CD4-positive, alpha-beta T cell (primary cell): ENCODE measurements at regions of chr9 and their contacts with region 1.

Region 1: GRCh38 chr9:37913480-37914153 is 9.7 kb upstream of the SLC25A51 start:
- DNase-seq: peak; percentile 58 to 85 (median 76)
- ATAC-seq: peak; percentile 90
- H3K4me3 ChIP-seq: no peak overlapping the region
- H3K4me3 Mint-ChIP-seq: no peak overlapping the region
- H3K27ac ChIP-seq: no peak overlapping the region
- H3K27ac Mint-ChIP-seq: no peak overlapping the region
- H3K4me1 ChIP-seq: no peaks in the 10 kb centered on the region
- H3K4me1 Mint-ChIP-seq: no peaks in the 10 kb centered on the region
- H3K27me3 ChIP-seq: no peaks in the 10 kb centered on the region
- H3K27me3 Mint-ChIP-seq: peaks cover 5% of the 10 kb centered on the region
- CTCF ChIP-seq: peak; percentile 95

Region 2: GRCh38 chr9:37880916-37881479 is 32.6 kb before region 1 on chr9:
- CTCF ChIA-PET with region 1: no interaction called
- POLR2A ChIA-PET with region 1: no interaction called
- intact Hi-C with region 1: no loop called
- DNase-seq: no peak
- ATAC-seq: no peak
- H3K4me3 ChIP-seq: no peak overlapping the region
- H3K4me3 Mint-ChIP-seq: no peak overlapping the region
- H3K27ac ChIP-seq: no peak overlapping the region
- H3K27ac Mint-ChIP-seq: no peak overlapping the region
- H3K4me1 ChIP-seq: no peaks in the 10 kb centered on the region
- H3K4me1 Mint-ChIP-seq: no peaks in the 10 kb centered on the region
- H3K27me3 ChIP-seq: no peaks in the 10 kb centered on the region
- H3K27me3 Mint-ChIP-seq: no peaks in the 10 kb centered on the region
- CTCF ChIP-seq: no peak

Region 3: GRCh38 chr9:38061326-38061977 is 147.8 kb after region 1 on chr9:
- CTCF ChIA-PET with region 1: no interaction called
- POLR2A ChIA-PET with region 1: no interaction called
- intact Hi-C with region 1: loop called in 1 of 2 experiments (anchors 5 kb)
- DNase-seq: no peak
- ATAC-seq: no peak
- H3K4me3 ChIP-seq: no peak overlapping the region
- H3K4me3 Mint-ChIP-seq: no peak overlapping the region
- H3K27ac ChIP-seq: no peak overlapping the region
- H3K27ac Mint-ChIP-seq: no peak overlapping the region
- H3K4me1 ChIP-seq: no peaks in the 10 kb centered on the region
- H3K4me1 Mint-ChIP-seq: no peaks in the 10 kb centered on the region
- H3K27me3 ChIP-seq: no peaks in the 10 kb centered on the region
- H3K27me3 Mint-ChIP-seq: no peaks in the 10 kb centered on the region
- CTCF ChIP-seq: no peak

Region 4: DNA sequence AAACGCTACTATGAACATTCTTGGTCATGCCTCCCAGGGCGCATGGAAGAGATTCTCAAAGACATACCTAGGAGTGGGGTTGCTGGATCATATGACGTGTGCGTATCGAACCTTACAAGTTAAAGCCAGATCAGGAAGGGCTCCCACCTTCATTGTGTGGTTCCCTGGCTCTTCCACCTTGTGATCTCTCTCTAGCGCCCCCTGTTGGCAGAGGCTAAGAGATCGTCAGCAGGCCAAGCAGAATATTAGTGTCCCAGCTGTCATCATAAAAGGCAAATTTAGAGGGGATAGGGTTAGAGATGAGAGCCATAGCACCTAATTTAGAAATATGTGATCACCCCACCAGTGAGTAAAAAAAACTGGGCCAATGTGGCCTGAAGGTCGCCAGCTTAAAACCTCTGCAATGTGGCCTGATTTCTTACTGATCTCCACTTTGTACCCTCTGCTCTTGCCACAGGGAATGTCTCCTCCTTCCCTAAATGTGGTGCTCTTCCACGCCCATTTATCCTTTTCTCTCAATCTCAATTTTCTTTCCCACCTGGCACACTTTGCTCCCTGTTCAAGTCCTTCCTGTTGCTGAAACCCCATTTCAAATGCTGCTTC is 247.1 kb after region 1 on chr9:
- CTCF ChIA-PET with region 1: no interaction called
- POLR2A ChIA-PET with region 1: no interaction called
- intact Hi-C with region 1: loop called (anchors 1 to 2 kb)
- DNase-seq: peak; percentile 19 to 74 (median 49)
- ATAC-seq: no peak
- H3K4me3 ChIP-seq: no peak overlapping the region
- H3K4me3 Mint-ChIP-seq: no peak overlapping the region
- H3K27ac ChIP-seq: no peak overlapping the region
- H3K27ac Mint-ChIP-seq: no peak overlapping the region
- H3K4me1 ChIP-seq: peaks cover 4% of the 10 kb centered on the region
- H3K4me1 Mint-ChIP-seq: peaks cover 5% of the 10 kb centered on the region
- H3K27me3 ChIP-seq: no peaks in the 10 kb centered on the region
- H3K27me3 Mint-ChIP-seq: no peaks in the 10 kb centered on the region
- CTCF ChIP-seq: peak; percentile 78

Region 5: GRCh38 chr9:38362852-38363593 is 449.4 kb after region 1 on chr9:
- CTCF ChIA-PET with region 1: no interaction called
- POLR2A ChIA-PET with region 1: no interaction called
- intact Hi-C with region 1: loop called in 1 of 2 experiments (anchors 1 kb)
- DNase-seq: peak in 5 of 14 experiments; percentile 7 to 61 (median 27)
- ATAC-seq: peak; percentile 83
- H3K4me3 ChIP-seq: peak overlapping the region; percentile 24
- H3K4me3 Mint-ChIP-seq: peak overlapping the region; percentile 46
- H3K27ac ChIP-seq: no peak overlapping the region
- H3K27ac Mint-ChIP-seq: no peak overlapping the region
- H3K4me1 ChIP-seq: no peaks in the 10 kb centered on the region
- H3K4me1 Mint-ChIP-seq: peaks cover 7% of the 10 kb centered on the region
- H3K27me3 ChIP-seq: no peaks in the 10 kb centered on the region
- H3K27me3 Mint-ChIP-seq: peaks cover 4% of the 10 kb centered on the region
- CTCF ChIP-seq: no peak

Region 6: DNA sequence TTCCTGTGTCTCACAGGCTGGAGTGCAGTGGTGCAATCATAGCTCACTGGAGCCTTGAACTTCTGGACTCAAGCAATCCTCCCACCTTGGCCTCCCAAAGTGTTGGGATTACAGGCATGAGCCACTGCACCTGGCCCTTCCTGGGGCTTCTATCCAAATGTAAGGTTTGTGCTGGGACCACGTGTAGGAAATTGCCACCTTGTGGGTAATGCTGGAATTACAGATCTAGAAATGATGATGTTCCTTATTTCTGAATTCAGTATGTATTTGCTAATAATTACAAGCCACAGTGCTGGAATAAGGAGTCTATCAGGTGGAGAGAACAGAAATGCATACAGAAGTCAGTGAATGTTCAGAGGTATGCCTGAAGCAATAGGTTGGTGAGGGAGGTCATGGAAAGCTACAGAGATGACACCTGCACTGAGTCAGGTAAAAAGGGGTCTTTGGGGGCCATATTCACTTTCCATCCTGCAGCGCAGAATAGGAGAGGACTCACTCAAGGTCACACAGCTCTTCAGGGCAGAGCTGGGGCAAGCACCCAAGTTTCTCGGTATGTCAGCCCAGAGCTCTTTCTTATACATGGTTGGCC is 519.4 kb after region 1 on chr9:
- CTCF ChIA-PET with region 1: interaction called, 4 read pairs
- POLR2A ChIA-PET with region 1: no interaction called
- intact Hi-C with region 1: loop called in 1 of 2 experiments (anchors 1 kb)
- DNase-seq: peak in 3 of 14 experiments; percentile 38 to 57 (median 48)
- ATAC-seq: no peak
- H3K4me3 ChIP-seq: no peak overlapping the region
- H3K4me3 Mint-ChIP-seq: no peak overlapping the region
- H3K27ac ChIP-seq: no peak overlapping the region
- H3K27ac Mint-ChIP-seq: no peak overlapping the region
- H3K4me1 ChIP-seq: peaks cover 2% of the 10 kb centered on the region
- H3K4me1 Mint-ChIP-seq: peaks cover 19% of the 10 kb centered on the region
- H3K27me3 ChIP-seq: no peaks in the 10 kb centered on the region
- H3K27me3 Mint-ChIP-seq: peaks cover 1% of the 10 kb centered on the region
- CTCF ChIP-seq: peak; percentile 48